Heart left ventricle (tissue), 16 donors: ENCODE measurements at regions of chr7 and their contacts with region 1.

Region 1: DNA sequence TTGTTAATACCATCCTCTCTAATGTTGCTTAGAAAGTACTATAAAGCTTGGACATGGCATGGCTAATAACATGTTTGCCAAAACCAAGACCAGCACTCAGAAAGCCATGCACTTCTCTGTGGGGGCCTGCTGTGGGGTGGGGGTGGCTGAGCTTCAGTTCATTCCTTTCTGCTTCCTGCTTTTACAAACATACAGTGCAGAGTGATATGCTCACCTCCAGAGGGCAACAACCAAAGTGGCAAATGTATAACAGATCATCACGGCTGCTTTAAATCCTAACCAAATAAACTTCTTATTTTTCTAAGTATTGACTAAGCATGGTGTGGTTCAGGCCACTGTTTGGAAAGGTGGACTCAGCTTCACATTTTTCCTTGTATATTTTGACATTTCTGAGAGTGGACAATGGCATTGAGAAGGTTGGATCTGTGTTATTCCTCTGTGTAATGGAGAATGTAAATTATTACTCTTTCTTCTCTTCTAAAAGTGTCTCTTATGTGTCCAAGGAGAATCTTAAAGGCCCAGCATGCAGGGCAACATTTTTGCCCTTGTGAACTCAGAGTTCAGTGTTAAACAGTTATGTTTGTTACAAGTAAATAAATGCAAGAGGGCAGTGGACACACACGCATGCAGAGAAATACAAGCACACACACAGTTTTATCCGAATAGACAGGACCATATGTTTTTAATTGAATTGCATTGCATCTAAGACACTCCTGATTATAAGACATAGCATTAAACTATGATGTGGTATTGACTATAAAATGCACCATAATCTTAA is 186.1 kb downstream of the HERPUD2 start:
- DNase-seq: no peak
- ATAC-seq: no peak
- H3K4me3 ChIP-seq: no peak overlapping the region
- H3K27ac ChIP-seq: no peak overlapping the region
- H3K4me1 ChIP-seq: peaks cover 0 to 12% (median 0%) of the 10 kb centered on the region in 12 donors
- H3K27me3 ChIP-seq: no peaks in the 10 kb centered on the region
- CTCF ChIP-seq: no peak
- POLR2A ChIP-seq: no peak

Region 2: DNA sequence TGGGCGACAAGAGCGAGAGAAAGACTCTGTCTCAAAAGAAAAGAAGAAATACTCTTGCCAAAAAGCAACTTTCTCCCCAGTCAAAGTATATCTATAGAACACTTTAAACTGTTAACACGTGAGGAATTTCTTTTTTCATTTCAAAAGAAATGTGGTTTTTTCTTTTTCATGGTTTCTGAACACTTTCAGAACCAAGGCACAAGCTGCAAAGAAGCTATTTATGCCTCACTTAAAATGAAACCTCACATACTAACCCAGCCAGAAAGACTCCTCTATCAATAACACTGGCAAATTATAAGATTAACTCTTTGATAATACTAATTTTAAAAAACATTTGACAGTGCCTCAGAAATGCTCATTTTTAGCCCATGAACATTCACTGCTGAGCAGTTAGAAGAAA is 275.8 kb before region 1 on chr7:
- intact Hi-C with region 1: no loop called
- DNase-seq: no peak
- ATAC-seq: no peak
- H3K4me3 ChIP-seq: peak overlapping the region in 5 of 12 donors; percentile 5 to 29 (median 13)
- H3K27ac ChIP-seq: peak overlapping the region in 9 of 12 donors; percentile 32 to 66 (median 44)
- H3K4me1 ChIP-seq: peaks cover 0 to 83% (median 18%) of the 10 kb centered on the region in 12 donors
- H3K27me3 ChIP-seq: no peaks in the 10 kb centered on the region
- CTCF ChIP-seq: no peak
- POLR2A ChIP-seq: no peak

Region 3: GRCh38 chr7:35530124-35531109 is 21.6 kb after region 1 on chr7:
- intact Hi-C with region 1: loop called in 1 of 10 experiments (anchors 1 kb)
- DNase-seq: no peak
- ATAC-seq: peak in 1 of 4 donors; percentile 35
- H3K4me3 ChIP-seq: no peak overlapping the region
- H3K27ac ChIP-seq: no peak overlapping the region
- H3K4me1 ChIP-seq: peaks cover 0 to 3% (median 0%) of the 10 kb centered on the region in 12 donors
- H3K27me3 ChIP-seq: peaks cover 0 to 5% (median 0%) of the 10 kb centered on the region in 9 donors
- CTCF ChIP-seq: no peak
- POLR2A ChIP-seq: no peak